ENCODE measurements at regions of chr4 and their contacts with region 1.

Region 1: GRCh38 chr4:73653695-73654106 is 33.5 kb upstream of the RASSF6 start:
- DNase-seq: no peak
- ATAC-seq: no peak

Region 2: GRCh38 chr4:72505314-72505744 is 1148.4 kb before region 1 on chr4:
- intact Hi-C with region 1: loop called (anchors 10 kb)
- DNase-seq: no peak
- ATAC-seq: peak; percentile 73

Region 3: GRCh38 chr4:72701987-72702819 is 951.5 kb before region 1 on chr4:
- intact Hi-C with region 1: loop called (anchors 10 kb)
- DNase-seq: no peak
- ATAC-seq: no peak

Region 4: GRCh38 chr4:73593631-73594241 is 60.0 kb before region 1 on chr4:
- intact Hi-C with region 1: loop called (anchors 10 kb)
- DNase-seq: no peak
- ATAC-seq: no peak

Measured in Right ventricle myocardium inferior (tissue), 1 donor.